Activated naive CD4-positive, alpha-beta T cell treated with anti-CD3 and anti-CD28 coated beads for 36 hours (primary cell): ENCODE measurements at regions of chr19 and their contacts with region 1.

Region 1: DNA sequence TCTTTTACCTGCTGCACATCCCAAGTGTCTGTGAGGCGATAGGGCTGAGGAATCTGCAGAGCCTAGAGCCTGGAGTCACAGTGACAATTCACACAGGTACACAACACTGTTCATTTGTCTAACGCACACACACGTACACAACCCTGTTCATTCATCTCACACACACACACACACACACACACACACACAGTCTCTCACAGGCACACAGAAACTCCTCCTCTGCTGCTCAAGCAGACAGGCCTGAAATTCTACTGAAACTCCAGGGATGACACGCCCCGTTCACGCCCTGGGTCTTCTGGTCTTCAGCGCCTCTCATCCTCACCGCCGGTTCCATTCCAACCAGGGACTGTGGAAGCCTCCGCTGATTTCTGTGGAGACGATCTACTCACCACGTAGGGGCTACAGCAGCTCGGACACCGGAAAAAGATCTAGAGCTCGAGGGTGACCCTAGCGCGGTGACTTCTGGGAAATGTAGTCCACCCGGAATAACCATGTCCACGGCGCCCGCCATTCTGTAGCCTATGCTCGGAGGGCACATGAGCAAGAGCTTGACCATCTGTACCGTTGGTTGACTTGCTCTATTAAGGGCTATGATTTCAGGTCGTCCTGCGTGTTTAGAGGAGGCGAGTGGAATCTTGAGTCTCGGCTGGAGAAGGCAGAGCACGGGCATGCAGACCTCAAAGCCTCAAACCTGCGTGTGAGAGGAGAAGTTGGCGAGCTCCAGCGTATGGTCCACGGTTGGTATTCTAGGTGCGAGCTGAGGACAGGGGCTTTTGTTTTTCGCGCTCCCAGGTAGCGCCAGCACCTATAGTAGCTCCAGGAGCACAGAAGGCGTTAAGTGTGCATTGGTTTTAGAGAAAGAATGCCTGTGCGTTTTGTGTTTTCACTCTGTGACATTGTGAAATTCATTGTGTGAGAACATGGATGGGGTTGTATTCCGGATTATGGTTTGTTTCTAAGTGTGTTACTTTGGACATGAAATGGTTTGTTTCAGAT is 33.4 kb downstream of the ZNF45 start:
- DNase-seq: peak; percentile 75
- H3K4me3 Mint-ChIP-seq: peak overlapping the region; percentile 86
- H3K27ac Mint-ChIP-seq: peak overlapping the region; percentile 68
- H3K4me1 Mint-ChIP-seq: peaks cover 17% of the 10 kb centered on the region
- H3K27me3 Mint-ChIP-seq: no peaks in the 10 kb centered on the region

Region 2: DNA sequence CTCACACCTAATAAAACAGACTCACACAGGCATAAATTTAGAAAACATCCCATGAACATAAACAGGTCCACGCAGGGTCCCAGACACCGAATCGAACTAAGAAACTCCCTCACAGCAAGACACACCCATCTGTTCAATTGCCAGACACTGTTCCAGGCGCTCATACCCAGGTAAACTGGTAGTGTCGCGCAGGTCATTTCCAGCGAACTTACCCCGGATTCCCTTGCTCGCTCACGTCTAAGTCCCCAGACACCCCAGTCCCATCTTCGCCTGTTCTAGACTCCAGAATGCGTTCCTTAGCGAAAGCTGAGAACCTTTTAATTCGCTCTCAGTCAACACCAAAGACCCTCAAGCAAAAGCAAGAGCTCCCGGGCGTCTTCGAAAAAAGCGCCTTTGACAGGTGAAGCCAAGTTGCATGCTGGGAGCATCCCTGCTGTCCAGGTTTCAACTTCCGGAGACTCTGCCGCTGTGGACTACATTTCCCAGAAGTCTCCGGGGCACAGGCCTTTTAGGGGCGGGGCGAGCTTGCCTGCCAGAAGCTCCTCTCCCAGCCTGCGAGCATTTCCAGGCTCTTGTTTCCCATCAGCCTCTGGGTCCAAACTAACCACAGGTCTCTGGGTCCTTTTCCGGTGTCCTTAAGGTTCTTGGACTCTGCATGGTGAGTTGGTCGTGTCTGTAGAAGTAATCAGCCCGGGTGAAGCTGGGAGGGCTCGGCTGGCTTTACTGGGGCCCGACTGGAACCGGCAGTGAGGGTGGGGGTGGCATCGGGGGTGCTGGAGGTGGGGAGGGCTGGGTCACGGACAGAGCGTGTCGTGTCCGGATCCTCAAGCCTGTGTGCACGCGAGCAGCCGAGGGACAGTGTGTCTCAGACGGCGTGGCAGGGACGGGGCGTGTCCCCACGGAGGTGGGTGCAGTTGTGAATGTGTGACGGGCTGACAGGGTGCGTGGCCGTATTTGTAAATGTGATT is 74.6 kb before region 1 on chr19 and contains the start of gene ZNF283:
- CTCF ChIA-PET with region 1: no interaction called
- intact Hi-C with region 1: loop called (anchors 1 kb)
- DNase-seq: peak; percentile 92
- H3K4me3 Mint-ChIP-seq: peak within 1 kb of the TSS; percentile 88
- H3K27ac Mint-ChIP-seq: peak within 1 kb of the TSS; percentile 75
- H3K4me1 Mint-ChIP-seq: peaks cover 17% of the 10 kb centered on the region
- H3K27me3 Mint-ChIP-seq: no peaks in the 10 kb centered on the region
- total RNA-seq, gene ZNF283: 6.8 to 7.7 TPM

Region 3: DNA sequence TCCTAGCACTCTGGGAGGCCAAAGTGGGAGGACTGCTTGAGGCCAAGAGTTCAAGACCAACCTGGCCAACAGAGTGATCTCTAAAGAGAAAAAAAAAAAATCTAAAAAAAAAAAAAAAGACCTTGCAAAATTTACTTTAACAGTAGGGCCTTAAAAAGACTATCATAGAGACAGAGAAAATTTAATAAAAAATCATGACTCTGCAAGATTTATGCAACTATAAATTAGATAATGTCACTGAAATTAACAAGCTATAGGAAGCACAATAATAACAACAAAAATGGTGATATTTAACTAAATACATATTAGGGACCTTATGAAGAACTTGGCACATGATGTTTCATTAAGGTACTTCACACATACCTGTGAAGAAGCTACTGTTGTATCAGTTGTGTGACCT is 22.2 kb after region 1 on chr19:
- CTCF ChIA-PET with region 1: no interaction called
- intact Hi-C with region 1: no loop called
- DNase-seq: no peak
- H3K4me3 Mint-ChIP-seq: no peak overlapping the region
- H3K27ac Mint-ChIP-seq: no peak overlapping the region
- H3K4me1 Mint-ChIP-seq: no peaks in the 10 kb centered on the region
- H3K27me3 Mint-ChIP-seq: no peaks in the 10 kb centered on the region